PC-9 (cell line): ENCODE measurements at regions of chr2 and their contacts with region 1.

Region 1: DNA sequence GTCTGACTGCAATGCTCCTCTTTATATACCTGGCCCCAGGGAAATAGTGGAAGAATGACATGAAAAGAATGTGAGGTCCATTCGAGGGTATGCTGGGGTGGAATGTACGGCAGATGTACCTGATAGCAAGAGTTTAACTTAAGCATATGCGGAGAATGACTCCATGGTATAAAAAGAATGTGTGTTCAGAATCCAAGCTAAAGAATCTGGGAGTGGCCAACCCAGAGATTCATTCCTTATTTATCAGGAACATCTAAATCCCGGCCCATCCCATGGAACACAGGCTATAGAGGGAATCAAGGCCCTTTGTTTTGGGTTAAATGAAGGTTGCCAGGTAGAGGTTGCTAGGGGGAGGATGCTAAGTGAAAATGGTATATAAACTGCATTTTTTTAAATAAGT is 150.0 kb downstream of the ZNF385B start:
- DNase-seq: peak; percentile 59 to 80
- H3K4me3 ChIP-seq: no peak overlapping the region
- H3K27ac ChIP-seq: no peak overlapping the region
- H3K4me1 ChIP-seq: no peaks in the 10 kb centered on the region; the same call in 1 of the 2 replicates
- H3K27me3 ChIP-seq: no peaks in the 10 kb centered on the region
- CTCF ChIP-seq: no peak

Region 2: GRCh38 chr2:178924817-178925216 is 786.6 kb before region 1 on chr2:
- CTCF ChIA-PET with region 1: no interaction called
- POLR2A ChIA-PET with region 1: no interaction called
- intact Hi-C with region 1: no loop called
- DNase-seq: peak in 1 of 2 experiments; percentile 46
- H3K4me3 ChIP-seq: no peak overlapping the region
- H3K27ac ChIP-seq: no peak overlapping the region
- H3K4me1 ChIP-seq: peaks cover 9% of the 10 kb centered on the region
- H3K27me3 ChIP-seq: no peaks in the 10 kb centered on the region
- CTCF ChIP-seq: no peak

Region 3: GRCh38 chr2:179460181-179460929 is 251.0 kb before region 1 on chr2:
- CTCF ChIA-PET with region 1: no interaction called
- POLR2A ChIA-PET with region 1: no interaction called
- intact Hi-C with region 1: loop called (anchors 1 kb)
- DNase-seq: peak; percentile 49 to 68
- H3K4me3 ChIP-seq: no peak overlapping the region
- H3K27ac ChIP-seq: peak overlapping the region; percentile 53
- H3K4me1 ChIP-seq: peaks cover 5% of the 10 kb centered on the region; the same call in 1 of the 2 replicates
- H3K27me3 ChIP-seq: no peaks in the 10 kb centered on the region
- CTCF ChIP-seq: no peak

Region 4: GRCh38 chr2:179612108-179612507 is 99.3 kb before region 1 on chr2:
- CTCF ChIA-PET with region 1: no interaction called
- POLR2A ChIA-PET with region 1: interaction called, 5 read pairs
- intact Hi-C with region 1: loop called (anchors 1 kb)
- DNase-seq: no peak
- H3K4me3 ChIP-seq: no peak overlapping the region
- H3K27ac ChIP-seq: no peak overlapping the region
- H3K4me1 ChIP-seq: no peaks in the 10 kb centered on the region
- H3K27me3 ChIP-seq: no peaks in the 10 kb centered on the region
- CTCF ChIP-seq: no peak

Region 5: GRCh38 chr2:179692610-179693009 is 18.8 kb before region 1 on chr2:
- CTCF ChIA-PET with region 1: interaction called, 3 read pairs
- POLR2A ChIA-PET with region 1: interaction called, 3 read pairs
- intact Hi-C with region 1: loop called (anchors 1 kb)
- DNase-seq: peak in 1 of 2 experiments; percentile 16
- H3K4me3 ChIP-seq: no peak overlapping the region
- H3K27ac ChIP-seq: no peak overlapping the region
- H3K4me1 ChIP-seq: no peaks in the 10 kb centered on the region
- H3K27me3 ChIP-seq: no peaks in the 10 kb centered on the region
- CTCF ChIP-seq: no peak